Ascending aorta (tissue), 2 donors: ENCODE measurements at regions of chr1 and their contacts with region 1.

Region 1: DNA sequence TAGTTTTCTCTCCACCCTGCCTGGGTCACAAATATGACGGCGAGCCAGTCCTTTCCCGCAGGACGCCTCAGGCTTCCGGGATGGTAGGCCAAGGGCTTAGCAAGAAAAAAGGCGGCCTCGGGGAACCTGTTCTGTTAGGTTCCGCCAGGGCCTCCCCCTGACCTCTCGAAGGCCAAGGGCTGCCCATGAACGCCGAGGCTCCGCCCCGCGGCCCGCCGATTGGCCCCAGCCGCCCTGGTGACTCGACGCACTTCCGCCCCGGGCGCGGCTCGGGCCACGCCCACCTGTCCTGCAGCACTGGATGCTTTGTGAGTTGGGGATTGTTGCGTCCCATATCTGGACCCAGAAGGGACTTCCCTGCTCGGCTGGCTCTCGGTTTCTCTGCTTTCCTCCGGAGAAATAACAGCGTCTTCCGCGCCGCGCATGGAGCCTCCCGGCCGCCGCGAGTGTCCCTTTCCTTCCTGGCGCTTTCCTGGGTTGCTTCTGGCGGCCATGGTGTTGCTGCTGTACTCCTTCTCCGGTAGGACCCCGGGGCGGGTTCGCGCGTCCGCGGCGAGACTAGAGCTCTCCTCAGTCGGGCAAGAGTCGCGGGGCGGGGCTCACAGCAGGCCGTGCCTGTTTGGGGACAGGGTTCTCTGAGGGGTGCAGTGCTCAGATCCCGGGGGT is at the start of gene CD46:
- DNase-seq: peak; percentile 90 to 98
- H3K4me3 ChIP-seq: peak within 1 kb of the TSS; percentile 83 to 91
- H3K27ac ChIP-seq: peak within 1 kb of the TSS; percentile 84
- H3K4me1 ChIP-seq: peaks cover 0 to 18% of the 10 kb centered on the region in 2 donors
- H3K27me3 ChIP-seq: no peaks in the 10 kb centered on the region
- CTCF ChIP-seq: no peak
- total RNA-seq, gene CD46: 64.5 TPM

Region 2: GRCh38 chr1:207321079-207321789 is 430.7 kb before region 1 on chr1 and contains the start of gene CD55:
- intact Hi-C with region 1: loop called (anchors 10 kb)
- DNase-seq: peak; percentile 96 to 99
- H3K4me3 ChIP-seq: peak within 1 kb of the TSS; percentile 89 to 93
- H3K27ac ChIP-seq: peak within 1 kb of the TSS; percentile 86 to 91
- H3K4me1 ChIP-seq: no peaks in the 10 kb centered on the region
- H3K27me3 ChIP-seq: no peaks in the 10 kb centered on the region
- CTCF ChIP-seq: no peak
- total RNA-seq, gene CD55: 73.1 TPM

Region 3: DNA sequence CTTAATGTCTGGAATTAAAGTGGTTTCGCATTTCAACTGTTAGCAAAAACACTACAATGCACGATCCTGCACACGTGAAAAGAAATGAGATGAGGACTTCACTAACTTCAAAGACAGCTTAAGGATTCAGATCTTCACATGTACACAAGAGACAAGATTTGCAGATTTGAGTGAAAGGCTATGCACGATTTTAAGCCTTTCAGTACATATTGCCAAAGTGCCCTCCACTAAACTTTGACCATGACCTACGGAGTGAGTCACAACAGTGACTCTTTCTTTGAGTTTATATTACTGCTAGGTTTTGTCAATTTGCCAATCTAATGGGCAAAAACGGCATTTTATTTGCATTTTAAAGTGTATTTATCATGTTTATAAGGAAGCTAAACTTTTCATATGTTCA is 148.1 kb before region 1 on chr1:
- intact Hi-C with region 1: no loop called
- DNase-seq: no peak
- H3K4me3 ChIP-seq: no peak overlapping the region
- H3K27ac ChIP-seq: no peak overlapping the region
- H3K4me1 ChIP-seq: no peaks in the 10 kb centered on the region
- H3K27me3 ChIP-seq: no peaks in the 10 kb centered on the region
- CTCF ChIP-seq: no peak

Region 4: DNA sequence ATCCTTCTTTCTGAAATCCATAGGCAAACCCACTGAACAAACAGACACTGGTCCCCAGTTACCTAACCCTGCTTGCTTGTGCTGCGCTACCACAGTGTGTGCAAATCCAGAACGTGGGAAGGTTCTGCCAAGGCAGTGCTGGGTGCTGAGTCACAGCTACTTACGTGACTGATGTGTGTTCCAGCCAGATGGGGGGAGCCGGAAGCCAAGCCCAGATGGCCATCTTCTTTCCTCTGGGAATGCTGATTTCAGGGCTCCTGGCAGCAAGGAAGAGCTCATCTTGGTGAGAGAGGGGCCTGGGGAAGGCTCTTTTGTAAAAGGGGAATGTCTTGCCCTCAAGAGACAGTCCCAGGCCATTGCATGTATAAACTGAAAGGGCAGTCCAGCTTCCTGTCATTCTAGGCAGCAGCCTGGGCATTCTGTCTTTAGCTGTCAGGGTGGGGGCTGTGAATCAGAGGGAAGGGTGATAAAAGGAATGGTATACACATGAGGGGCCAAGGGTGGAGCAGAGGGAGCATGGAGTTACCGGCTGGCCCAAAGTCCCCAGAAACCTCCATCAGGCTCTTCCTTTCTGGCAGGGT is 54.0 kb after region 1 on chr1:
- intact Hi-C with region 1: loop called (anchors 5 kb)
- DNase-seq: peak in 1 of 2 donors; percentile 93
- H3K4me3 ChIP-seq: peak overlapping the region in 1 of 2 donors; percentile 12
- H3K27ac ChIP-seq: peak overlapping the region; percentile 92 to 98
- H3K4me1 ChIP-seq: peaks cover 32 to 66% of the 10 kb centered on the region in 2 donors
- H3K27me3 ChIP-seq: no peaks in the 10 kb centered on the region
- CTCF ChIP-seq: no peak

Region 5: DNA sequence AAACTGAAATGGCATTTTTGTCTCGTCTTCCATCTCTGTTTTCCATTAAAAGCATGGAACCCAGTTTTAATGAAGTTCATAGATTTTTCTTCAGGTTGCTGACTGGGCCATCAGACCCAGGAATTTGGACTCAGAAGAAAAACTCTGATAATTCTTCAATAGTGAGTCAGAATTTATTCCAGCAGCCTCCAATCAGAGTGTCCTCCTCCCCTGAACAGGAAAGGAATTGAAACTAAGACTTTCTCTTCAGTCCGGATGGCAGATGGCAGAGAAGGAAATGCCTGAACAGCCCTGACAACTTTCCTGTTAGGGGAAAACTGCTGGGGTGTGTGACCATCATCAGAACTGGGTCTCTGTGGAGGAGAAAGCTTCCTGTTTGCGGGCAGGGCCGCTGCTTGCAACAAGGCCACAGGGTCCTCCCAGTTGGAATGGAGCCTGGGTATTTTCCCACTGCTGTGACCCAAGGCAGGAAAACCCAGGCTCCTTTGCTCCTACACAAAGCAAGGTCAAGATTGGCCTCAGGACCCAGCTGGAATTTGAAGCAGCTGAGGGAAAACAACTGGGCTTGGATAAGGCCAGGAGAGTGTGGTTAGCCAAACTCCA is 138.3 kb after region 1 on chr1:
- intact Hi-C with region 1: no loop called
- DNase-seq: peak in 1 of 2 donors; percentile 89
- H3K4me3 ChIP-seq: peak overlapping the region in 1 of 2 donors; percentile 43
- H3K27ac ChIP-seq: peak overlapping the region; percentile 88 to 90
- H3K4me1 ChIP-seq: peaks cover 21 to 43% of the 10 kb centered on the region in 2 donors
- H3K27me3 ChIP-seq: no peaks in the 10 kb centered on the region
- CTCF ChIP-seq: no peak